Right ventricle myocardium inferior (tissue), 1 donor: ENCODE measurements at regions of chr10 and their contacts with region 1.

Region 1: GRCh38 chr10:104045151-104046089 is 40.3 kb downstream of the COL17A1 start:
- DNase-seq: no peak
- ATAC-seq: peak; percentile 48

Region 2: GRCh38 chr10:104197364-104197763 is 151.9 kb after region 1 on chr10:
- intact Hi-C with region 1: no loop called
- DNase-seq: no peak
- ATAC-seq: no peak

Region 3: DNA sequence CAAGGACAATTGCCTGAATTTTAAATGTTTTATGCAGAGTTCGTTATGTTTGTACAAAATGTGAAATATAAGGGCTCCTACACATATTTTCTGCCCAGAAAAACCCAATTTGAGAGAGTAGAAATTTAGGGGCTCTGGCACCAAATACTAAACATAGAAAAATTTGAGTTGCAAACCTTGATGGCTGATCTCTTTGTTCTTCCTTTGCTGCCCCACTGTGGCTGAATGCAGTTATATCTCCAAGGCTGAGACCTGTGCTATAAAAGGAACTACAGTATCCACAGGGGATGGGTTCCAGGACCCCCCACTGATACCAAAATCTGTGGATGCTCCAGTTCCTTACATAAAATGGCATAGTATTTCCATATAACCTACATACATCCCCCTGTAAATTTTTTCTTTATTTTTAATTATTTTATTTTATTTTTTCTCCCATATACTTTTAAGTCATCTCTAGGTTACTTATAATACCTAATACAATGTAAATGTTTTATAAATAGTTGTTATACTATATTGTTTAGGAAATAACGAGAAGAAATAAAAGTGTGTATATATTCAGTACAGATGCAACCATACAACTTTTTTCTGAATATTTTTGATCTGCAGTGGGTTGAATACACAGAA is 164.3 kb after region 1 on chr10:
- intact Hi-C with region 1: loop called (anchors 1 kb)
- DNase-seq: no peak
- ATAC-seq: no peak